Common myeloid progenitor, CD34-positive (primary cell): ENCODE measurements at regions of chrX and their contacts with region 1.

Region 1: GRCh38 chrX:132071260-132071659 is 48.2 kb downstream of the STK26 start:
- DNase-seq: peak in 2 of 3 donors; percentile 45 to 47
- H3K4me3 ChIP-seq: no peak overlapping the region
- H3K27ac ChIP-seq: no peak overlapping the region
- H3K4me1 ChIP-seq: no peaks in the 10 kb centered on the region
- H3K27me3 ChIP-seq: peaks cover 0 to 5% (median 0%) of the 10 kb centered on the region in 5 experiments

Region 2: DNA sequence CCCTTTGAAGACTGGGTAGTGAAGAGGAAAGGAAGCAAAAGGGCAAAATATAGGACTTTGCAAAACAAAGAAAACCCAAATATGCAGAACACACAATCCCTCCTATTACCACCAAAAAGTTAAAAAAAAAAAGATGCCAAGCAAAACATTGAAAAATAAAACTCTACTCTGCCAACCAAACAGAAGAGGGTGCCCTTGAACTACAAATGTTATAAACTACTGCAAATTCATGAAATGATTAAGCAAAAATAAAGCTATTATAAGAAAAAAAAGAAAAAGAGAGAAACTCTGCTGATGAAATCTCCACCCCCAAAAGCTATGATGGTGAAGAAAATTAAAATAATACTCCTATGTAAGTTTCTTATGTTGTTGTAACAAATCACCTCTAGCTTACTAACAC is 216.7 kb before region 1 on chrX:
- CTCF ChIA-PET with region 1: interaction called, 15 read pairs
- POLR2A ChIA-PET with region 1: interaction called, 3 read pairs
- DNase-seq: peak; percentile 67 to 86 (median 82)
- H3K4me3 ChIP-seq: no peak overlapping the region
- H3K27ac ChIP-seq: no peak overlapping the region
- H3K4me1 ChIP-seq: no peaks in the 10 kb centered on the region
- H3K27me3 ChIP-seq: peaks cover 0 to 15% (median 0%) of the 10 kb centered on the region in 5 experiments

Region 3: GRCh38 chrX:131970347-131970746 is 100.9 kb before region 1 on chrX:
- CTCF ChIA-PET with region 1: no interaction called
- POLR2A ChIA-PET with region 1: no interaction called
- DNase-seq: no peak
- H3K4me3 ChIP-seq: no peak overlapping the region
- H3K27ac ChIP-seq: no peak overlapping the region
- H3K4me1 ChIP-seq: no peaks in the 10 kb centered on the region
- H3K27me3 ChIP-seq: peaks cover 0 to 9% (median 0%) of the 10 kb centered on the region in 5 experiments